ENCODE measurements at regions of chr1 and their contacts with region 1.

Region 1: DNA sequence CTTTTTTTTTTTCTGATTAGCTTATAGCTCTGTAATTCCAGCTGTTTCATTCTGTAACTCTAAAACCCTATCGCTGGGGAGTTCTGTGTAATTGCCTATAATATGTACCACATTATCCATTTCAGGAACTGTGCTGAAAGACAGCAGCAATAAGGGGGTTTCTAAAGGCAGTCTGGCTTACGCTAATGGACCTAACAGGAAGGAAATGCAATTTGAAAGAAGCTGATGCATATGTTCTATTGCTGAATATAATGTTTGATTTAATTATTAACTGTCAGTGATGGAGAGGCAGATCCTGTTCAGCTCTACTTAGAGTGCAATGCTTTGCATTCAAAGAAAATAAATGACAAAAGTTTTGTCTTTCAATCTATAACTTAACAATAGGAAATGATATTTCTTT is 209.4 kb upstream of the SNX7 start:
- DNase-seq: no peak
- H3K4me3 ChIP-seq: no peak overlapping the region
- H3K27ac ChIP-seq: no peak overlapping the region
- H3K4me1 ChIP-seq: no peaks in the 10 kb centered on the region
- H3K27me3 ChIP-seq: no peaks in the 10 kb centered on the region
- CTCF ChIP-seq: no peak
- POLR2A ChIP-seq: no peak

Region 2: DNA sequence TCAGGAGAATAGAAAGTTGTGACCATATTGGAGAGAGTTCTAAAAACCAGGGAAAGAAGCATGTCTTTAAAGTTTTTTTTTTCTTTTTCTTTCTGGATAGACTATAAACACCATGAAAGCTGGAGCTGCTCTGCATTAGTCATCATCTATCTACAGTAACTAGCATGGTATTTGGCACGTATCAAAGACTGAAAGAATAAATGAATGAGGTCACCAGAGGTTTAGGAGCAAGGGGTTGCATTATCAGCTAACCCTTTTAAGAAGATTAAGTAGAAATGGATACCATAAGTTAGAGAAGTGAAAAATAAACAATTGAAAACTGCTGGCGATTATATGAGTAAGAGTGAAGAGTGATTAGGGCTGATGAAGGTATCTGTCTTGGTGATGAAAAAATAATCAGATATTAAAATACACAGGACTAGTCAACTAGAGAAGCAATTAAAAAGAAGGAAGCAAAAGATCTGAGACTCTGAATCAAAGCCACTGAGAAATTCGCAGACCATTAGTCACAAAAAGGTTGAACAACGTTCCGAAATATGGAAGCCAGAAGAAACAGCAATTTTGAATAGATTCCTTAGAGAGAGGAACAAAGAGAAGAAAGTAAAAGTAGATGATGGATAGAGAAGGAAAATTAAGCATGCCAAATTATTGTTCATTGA is 1067.7 kb before region 1 on chr1:
- CTCF ChIA-PET with region 1: no interaction called
- POLR2A ChIA-PET with region 1: no interaction called
- dilution Hi-C with region 1: no loop called
- intact Hi-C with region 1: no loop called
- DNase-seq: peak; percentile 73
- H3K4me3 ChIP-seq: no peak overlapping the region
- H3K27ac ChIP-seq: peak overlapping the region; percentile 55
- H3K4me1 ChIP-seq: peaks cover 13% of the 10 kb centered on the region
- H3K27me3 ChIP-seq: no peaks in the 10 kb centered on the region
- CTCF ChIP-seq: no peak
- POLR2A ChIP-seq: no peak

Region 3: GRCh38 chr1:98429965-98430443 is 22.2 kb before region 1 on chr1:
- CTCF ChIA-PET with region 1: interaction called, 10 read pairs
- POLR2A ChIA-PET with region 1: no interaction called
- dilution Hi-C with region 1: no loop called
- intact Hi-C with region 1: no loop called
- DNase-seq: no peak
- H3K4me3 ChIP-seq: no peak overlapping the region
- H3K27ac ChIP-seq: no peak overlapping the region
- H3K4me1 ChIP-seq: no peaks in the 10 kb centered on the region
- H3K27me3 ChIP-seq: no peaks in the 10 kb centered on the region
- CTCF ChIP-seq: no peak
- POLR2A ChIP-seq: no peak

Region 4: GRCh38 chr1:99069146-99069545 is 617.0 kb after region 1 on chr1:
- CTCF ChIA-PET with region 1: no interaction called
- POLR2A ChIA-PET with region 1: no interaction called
- dilution Hi-C with region 1: no loop called
- intact Hi-C with region 1: no loop called
- DNase-seq: no peak
- H3K4me3 ChIP-seq: no peak overlapping the region
- H3K27ac ChIP-seq: no peak overlapping the region
- H3K4me1 ChIP-seq: no peaks in the 10 kb centered on the region
- H3K27me3 ChIP-seq: peaks cover 4 to 6% of the 10 kb centered on the region in 2 experiments
- CTCF ChIP-seq: no peak
- POLR2A ChIP-seq: no peak